ENCODE measurements at regions of chr11 and their contacts with region 1.

Region 1: DNA sequence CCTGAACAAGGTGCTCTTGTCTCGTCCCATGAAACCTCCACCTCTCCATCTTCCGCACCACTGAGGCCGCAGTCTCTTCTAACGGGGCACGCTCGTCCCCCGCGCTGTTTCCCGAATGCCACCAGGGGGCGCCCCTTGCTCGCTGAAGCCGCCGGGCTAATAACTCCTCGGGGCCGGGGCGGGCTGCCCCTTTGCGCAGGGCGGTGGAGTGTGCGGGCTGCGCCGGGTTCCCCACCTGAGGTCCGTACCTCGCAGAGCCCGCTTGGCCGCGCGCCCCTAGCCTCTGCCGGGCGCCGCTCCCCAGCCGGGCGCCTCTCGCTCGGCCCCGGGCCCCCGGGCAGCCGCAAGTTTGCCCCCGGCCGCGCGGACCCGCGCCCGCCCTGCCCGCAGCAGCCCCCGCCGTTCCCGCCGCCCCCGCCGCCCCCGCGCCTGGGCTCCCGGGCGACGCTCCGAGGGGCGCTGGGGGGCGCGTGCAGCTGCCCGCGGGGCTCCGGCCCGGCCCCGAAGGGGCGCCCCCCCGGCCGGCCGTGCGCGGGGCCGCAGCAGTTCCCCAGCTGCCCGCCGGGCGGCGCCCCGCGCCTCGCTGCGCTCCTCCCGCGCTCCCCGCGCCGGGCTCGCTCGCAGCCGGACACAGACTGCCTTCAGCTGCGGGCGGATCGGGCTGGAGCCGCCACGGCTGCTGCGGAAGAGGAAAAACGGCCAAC is at the start of gene GRIK4:
- DNase-seq: peak; percentile 86
- ATAC-seq: peak; percentile 92
- H3K4me3 Mint-ChIP-seq: no peak within 1 kb of the TSS
- H3K27ac Mint-ChIP-seq: no peak within 1 kb of the TSS
- H3K4me1 Mint-ChIP-seq: no peaks in the 10 kb centered on the region
- H3K27me3 Mint-ChIP-seq: peaks cover 58% of the 10 kb centered on the region
- CTCF ChIP-seq: peak; percentile 78
- total RNA-seq, gene GRIK4: not detected

Region 2: GRCh38 chr11:120489799-120490198 is 21.5 kb before region 1 on chr11:
- CTCF ChIA-PET with region 1: interaction called, 14 read pairs
- POLR2A ChIA-PET with region 1: no interaction called
- intact Hi-C with region 1: no loop called
- DNase-seq: no peak
- ATAC-seq: no peak
- H3K4me3 Mint-ChIP-seq: no peak overlapping the region
- H3K27ac Mint-ChIP-seq: no peak overlapping the region
- H3K4me1 Mint-ChIP-seq: no peaks in the 10 kb centered on the region
- H3K27me3 Mint-ChIP-seq: peaks cover 5% of the 10 kb centered on the region
- CTCF ChIP-seq: no peak

Region 3: GRCh38 chr11:120500414-120501071 is 10.7 kb before region 1 on chr11:
- CTCF ChIA-PET with region 1: interaction called, 15 read pairs
- POLR2A ChIA-PET with region 1: no interaction called
- intact Hi-C with region 1: no loop called
- DNase-seq: no peak
- ATAC-seq: no peak
- H3K4me3 Mint-ChIP-seq: no peak overlapping the region
- H3K27ac Mint-ChIP-seq: no peak overlapping the region
- H3K4me1 Mint-ChIP-seq: no peaks in the 10 kb centered on the region
- H3K27me3 Mint-ChIP-seq: peaks cover 24% of the 10 kb centered on the region
- CTCF ChIP-seq: no peak

Region 4: GRCh38 chr11:120554766-120555432 is 43.6 kb after region 1 on chr11:
- CTCF ChIA-PET with region 1: no interaction called
- POLR2A ChIA-PET with region 1: no interaction called
- intact Hi-C with region 1: no loop called
- DNase-seq: no peak
- ATAC-seq: no peak
- H3K4me3 Mint-ChIP-seq: no peak overlapping the region
- H3K27ac Mint-ChIP-seq: no peak overlapping the region
- H3K4me1 Mint-ChIP-seq: no peaks in the 10 kb centered on the region
- H3K27me3 Mint-ChIP-seq: peaks cover 8% of the 10 kb centered on the region
- CTCF ChIP-seq: no peak

Region 5: DNA sequence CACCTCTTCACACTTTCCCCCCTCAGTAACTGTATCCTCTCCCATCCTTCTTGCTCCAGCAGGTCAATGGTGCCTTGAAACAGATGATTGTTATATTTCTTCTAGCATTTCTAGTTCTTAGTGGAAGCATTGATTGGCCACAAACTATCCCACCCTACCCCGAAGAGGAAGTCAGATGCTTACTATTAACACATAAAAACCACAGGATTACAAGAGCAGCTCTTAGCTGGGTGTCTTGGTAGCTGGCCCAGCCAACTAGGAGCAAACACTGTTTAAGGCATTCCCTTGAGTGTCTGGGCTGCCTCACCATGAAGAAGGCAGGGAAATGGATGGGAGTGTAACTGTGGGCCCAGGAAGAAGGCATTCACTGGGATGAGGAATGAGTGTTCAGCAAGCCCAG is 176.9 kb after region 1 on chr11:
- CTCF ChIA-PET with region 1: interaction called, 42 read pairs
- POLR2A ChIA-PET with region 1: no interaction called
- intact Hi-C with region 1: loop called (anchors 5 kb)
- DNase-seq: no peak
- ATAC-seq: no peak
- H3K4me3 Mint-ChIP-seq: no peak overlapping the region
- H3K27ac Mint-ChIP-seq: no peak overlapping the region
- H3K4me1 Mint-ChIP-seq: no peaks in the 10 kb centered on the region
- H3K27me3 Mint-ChIP-seq: peaks cover 23% of the 10 kb centered on the region
- CTCF ChIP-seq: no peak

Region 6: GRCh38 chr11:120952461-120953434 is 441.5 kb after region 1 on chr11:
- CTCF ChIA-PET with region 1: interaction called, 3 read pairs
- POLR2A ChIA-PET with region 1: no interaction called
- intact Hi-C with region 1: loop called (anchors 10 kb)
- DNase-seq: peak; percentile 66
- ATAC-seq: peak; percentile 78
- H3K4me3 Mint-ChIP-seq: peak overlapping the region; percentile 36
- H3K27ac Mint-ChIP-seq: no peak overlapping the region
- H3K4me1 Mint-ChIP-seq: peaks cover 15% of the 10 kb centered on the region
- H3K27me3 Mint-ChIP-seq: peaks cover 16% of the 10 kb centered on the region
- CTCF ChIP-seq: peak; percentile 69